Naive thymus-derived CD4-positive, alpha-beta T cell (primary cell): ENCODE measurements at regions of chr19 and their contacts with region 1.

Region 1: DNA sequence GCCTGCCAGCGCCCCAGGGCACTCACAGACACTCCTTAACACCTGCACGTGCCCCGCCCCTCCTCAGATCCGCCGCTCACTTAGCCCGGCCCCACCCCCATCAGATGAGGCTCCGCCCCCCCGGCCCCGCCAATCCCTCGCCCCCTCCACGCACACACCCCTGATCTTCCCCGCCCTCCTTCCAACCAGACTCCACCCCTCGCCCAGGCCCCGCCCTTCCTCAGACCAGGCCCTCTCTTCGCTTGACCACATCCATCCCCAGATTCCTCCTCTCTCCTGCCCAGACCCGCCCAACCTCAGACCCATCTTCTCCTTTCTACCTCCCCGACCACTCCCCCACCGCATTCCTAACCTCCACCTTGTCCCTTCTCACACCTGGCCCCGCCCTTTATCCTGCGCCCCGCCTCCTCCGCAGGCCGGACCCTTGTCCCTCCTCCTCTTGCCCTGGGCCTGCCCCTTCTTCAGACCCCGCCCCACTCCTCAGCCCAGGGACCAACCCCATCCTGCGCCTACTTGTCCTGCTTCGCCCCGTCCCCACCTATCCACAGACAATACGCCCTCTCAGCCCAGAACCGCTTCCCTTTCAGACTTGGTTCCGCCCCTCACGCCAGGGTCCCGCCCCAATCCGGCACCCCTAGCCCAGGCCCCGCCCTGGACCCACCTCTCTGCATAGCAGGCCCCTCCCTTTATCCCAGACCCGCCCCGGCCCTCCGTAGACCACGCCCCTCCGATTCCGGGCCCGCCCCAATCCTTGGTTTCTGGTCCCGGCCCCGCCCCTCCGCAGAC is 452 bp upstream of the KLHL26 start:
- DNase-seq: peak; percentile 97 to 100 (median 98)
- ATAC-seq: peak; percentile 95
- H3K4me3 ChIP-seq: peak overlapping the region; percentile 77
- H3K4me3 Mint-ChIP-seq: peak overlapping the region; percentile 71 to 100 (median 88)
- H3K27ac ChIP-seq: peak overlapping the region; percentile 88
- H3K27ac Mint-ChIP-seq: peak overlapping the region; percentile 70 to 96 (median 87)
- H3K4me1 ChIP-seq: peaks cover 6 to 19% of the 10 kb centered on the region in 2 donors
- H3K4me1 Mint-ChIP-seq: peaks cover 23 to 48% (median 36%) of the 10 kb centered on the region in 7 donors
- H3K27me3 ChIP-seq: no peaks in the 10 kb centered on the region
- H3K27me3 Mint-ChIP-seq: peaks cover 0 to 18% (median 3%) of the 10 kb centered on the region in 5 donors

Region 2: GRCh38 chr19:18023622-18024251 is 612.6 kb before region 1 on chr19:
- CTCF ChIA-PET with region 1: no interaction called
- POLR2A ChIA-PET with region 1: no interaction called
- intact Hi-C with region 1: no loop called
- DNase-seq: peak; percentile 55 to 95 (median 93)
- ATAC-seq: peak; percentile 88
- H3K4me3 ChIP-seq: peak overlapping the region; percentile 6
- H3K4me3 Mint-ChIP-seq: peak overlapping the region; percentile 76 to 87 (median 83)
- H3K27ac ChIP-seq: peak overlapping the region; percentile 95
- H3K27ac Mint-ChIP-seq: peak overlapping the region; percentile 91 to 100 (median 99)
- H3K4me1 ChIP-seq: peaks cover 22 to 41% of the 10 kb centered on the region in 2 donors
- H3K4me1 Mint-ChIP-seq: peaks cover 48 to 66% (median 64%) of the 10 kb centered on the region in 7 donors
- H3K27me3 ChIP-seq: no peaks in the 10 kb centered on the region
- H3K27me3 Mint-ChIP-seq: no peaks in the 10 kb centered on the region

Region 3: GRCh38 chr19:18542936-18543815 is 93.2 kb before region 1 on chr19 and contains the start of gene FKBP8:
- CTCF ChIA-PET with region 1: no interaction called
- POLR2A ChIA-PET with region 1: no interaction called
- intact Hi-C with region 1: loop called (anchors 1 to 5 kb)
- DNase-seq: peak; percentile 84 to 95 (median 91)
- ATAC-seq: peak; percentile 97
- H3K4me3 ChIP-seq: peak within 1 kb of the TSS; percentile 68
- H3K4me3 Mint-ChIP-seq: peak within 1 kb of the TSS; percentile 90 to 99 (median 94)
- H3K27ac ChIP-seq: peak within 1 kb of the TSS; percentile 87
- H3K27ac Mint-ChIP-seq: peak within 1 kb of the TSS; percentile 89 to 100 (median 97)
- H3K4me1 ChIP-seq: peaks cover 15 to 16% of the 10 kb centered on the region in 2 donors
- H3K4me1 Mint-ChIP-seq: peaks cover 14 to 31% (median 26%) of the 10 kb centered on the region in 7 donors
- H3K27me3 ChIP-seq: no peaks in the 10 kb centered on the region
- H3K27me3 Mint-ChIP-seq: no peaks in the 10 kb centered on the region
- total RNA-seq, gene FKBP8: 137 to 241 (median 221) TPM

Region 4: DNA sequence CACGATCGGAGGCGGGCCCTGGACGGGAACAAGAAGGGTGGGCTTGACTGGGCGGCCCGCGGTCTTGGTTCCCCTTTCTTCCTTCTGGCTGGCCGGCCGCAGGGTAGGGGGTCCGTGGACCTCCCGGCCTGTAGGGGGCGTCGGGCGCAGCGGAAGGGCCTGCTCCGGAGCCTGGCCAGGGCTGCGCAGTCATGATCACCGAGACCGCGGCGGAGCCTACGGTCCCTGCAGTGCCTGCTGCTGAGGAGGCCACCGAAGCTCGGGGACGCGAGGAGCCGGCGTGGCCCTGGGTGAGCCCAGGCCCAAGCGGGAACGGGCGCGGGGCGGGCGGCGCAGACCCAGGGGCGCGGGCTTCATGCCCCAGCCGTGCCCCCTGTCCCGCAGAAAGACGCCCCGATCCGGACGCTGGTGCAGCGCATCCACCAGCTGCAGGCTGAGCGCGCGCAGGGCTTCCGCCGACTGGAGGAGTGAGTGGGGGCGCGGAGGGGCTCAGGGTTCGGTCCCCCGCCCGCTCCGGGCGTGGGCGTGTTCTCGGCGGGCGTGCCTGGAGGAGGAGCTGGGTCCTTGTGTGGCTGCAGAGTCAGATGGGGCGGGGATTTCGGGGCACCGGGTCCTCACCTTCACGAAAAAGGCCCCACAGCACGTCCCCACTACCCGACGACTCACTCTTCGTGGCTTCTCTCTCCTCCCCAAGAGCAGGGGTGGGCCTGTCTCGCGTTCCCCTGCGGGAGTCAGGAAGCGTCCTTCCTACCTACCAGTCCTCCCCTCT is 47.6 kb before region 1 on chr19 and contains the start of gene REX1BD:
- CTCF ChIA-PET with region 1: no interaction called
- POLR2A ChIA-PET with region 1: interaction called, 3 read pairs
- intact Hi-C with region 1: loop called (anchors 1 to 2 kb)
- DNase-seq: peak; percentile 77 to 92 (median 89)
- ATAC-seq: peak; percentile 89
- H3K4me3 ChIP-seq: peak within 1 kb of the TSS; percentile 72
- H3K4me3 Mint-ChIP-seq: peak within 1 kb of the TSS; percentile 80 to 95 (median 92)
- H3K27ac ChIP-seq: peak within 1 kb of the TSS; percentile 88
- H3K27ac Mint-ChIP-seq: peak within 1 kb of the TSS; percentile 89 to 96 (median 93)
- H3K4me1 ChIP-seq: peaks cover 18 to 33% of the 10 kb centered on the region in 2 donors
- H3K4me1 Mint-ChIP-seq: peaks cover 20 to 56% (median 42%) of the 10 kb centered on the region in 7 donors
- H3K27me3 ChIP-seq: no peaks in the 10 kb centered on the region
- H3K27me3 Mint-ChIP-seq: peaks cover 0 to 3% (median 0%) of the 10 kb centered on the region in 5 donors
- total RNA-seq, gene REX1BD: 83.9 to 152 (median 116) TPM

Region 5: DNA sequence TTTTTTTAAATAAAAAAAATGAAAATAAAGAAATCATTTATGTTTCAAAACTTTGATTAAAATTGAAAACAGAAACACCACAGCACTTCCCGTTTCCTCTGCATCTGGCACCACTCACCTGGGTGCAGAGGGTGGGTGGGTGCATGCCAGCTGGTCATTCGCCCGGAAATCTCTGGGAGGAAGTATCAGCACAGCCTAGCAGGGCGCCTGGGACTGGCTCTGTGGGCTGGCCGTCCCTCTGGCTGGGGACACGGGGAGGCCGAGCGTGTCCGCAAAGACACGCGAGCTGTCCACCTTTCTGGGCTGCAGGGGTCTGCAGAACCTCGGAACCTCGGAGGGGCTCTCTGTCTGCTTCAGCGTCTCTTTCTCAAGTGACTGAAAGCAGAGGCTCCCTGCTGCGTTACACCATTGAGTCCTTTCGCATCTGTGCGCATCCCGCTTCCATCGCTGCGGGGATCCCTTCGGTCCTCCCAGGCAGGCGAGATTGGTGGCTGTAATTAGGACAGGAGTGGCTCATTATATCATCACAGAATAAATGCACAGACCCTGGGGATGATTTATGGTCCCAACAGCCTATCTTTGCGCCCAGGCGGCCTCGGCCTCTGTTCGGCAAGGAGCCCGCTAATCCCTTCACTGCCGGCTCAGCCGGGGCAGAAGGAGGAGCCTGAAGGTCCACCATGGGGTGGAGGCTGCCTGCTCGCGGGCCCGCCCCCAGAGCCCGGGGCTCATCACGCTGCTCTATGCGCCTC is 64.3 kb after region 1 on chr19:
- CTCF ChIA-PET with region 1: no interaction called
- POLR2A ChIA-PET with region 1: interaction called, 4 read pairs
- intact Hi-C with region 1: loop called in 1 of 2 experiments (anchors 1 kb)
- DNase-seq: peak; percentile 50 to 76 (median 68)
- ATAC-seq: peak; percentile 97
- H3K4me3 ChIP-seq: peak overlapping the region; percentile 71
- H3K4me3 Mint-ChIP-seq: peak overlapping the region; percentile 84 to 95 (median 91)
- H3K27ac ChIP-seq: peak overlapping the region; percentile 76
- H3K27ac Mint-ChIP-seq: peak overlapping the region; percentile 39 to 98 (median 94)
- H3K4me1 ChIP-seq: peaks cover 24 to 38% of the 10 kb centered on the region in 2 donors
- H3K4me1 Mint-ChIP-seq: peaks cover 15 to 52% (median 36%) of the 10 kb centered on the region in 7 donors
- H3K27me3 ChIP-seq: no peaks in the 10 kb centered on the region
- H3K27me3 Mint-ChIP-seq: peaks cover 0 to 4% (median 0%) of the 10 kb centered on the region in 5 donors

Region 6: DNA sequence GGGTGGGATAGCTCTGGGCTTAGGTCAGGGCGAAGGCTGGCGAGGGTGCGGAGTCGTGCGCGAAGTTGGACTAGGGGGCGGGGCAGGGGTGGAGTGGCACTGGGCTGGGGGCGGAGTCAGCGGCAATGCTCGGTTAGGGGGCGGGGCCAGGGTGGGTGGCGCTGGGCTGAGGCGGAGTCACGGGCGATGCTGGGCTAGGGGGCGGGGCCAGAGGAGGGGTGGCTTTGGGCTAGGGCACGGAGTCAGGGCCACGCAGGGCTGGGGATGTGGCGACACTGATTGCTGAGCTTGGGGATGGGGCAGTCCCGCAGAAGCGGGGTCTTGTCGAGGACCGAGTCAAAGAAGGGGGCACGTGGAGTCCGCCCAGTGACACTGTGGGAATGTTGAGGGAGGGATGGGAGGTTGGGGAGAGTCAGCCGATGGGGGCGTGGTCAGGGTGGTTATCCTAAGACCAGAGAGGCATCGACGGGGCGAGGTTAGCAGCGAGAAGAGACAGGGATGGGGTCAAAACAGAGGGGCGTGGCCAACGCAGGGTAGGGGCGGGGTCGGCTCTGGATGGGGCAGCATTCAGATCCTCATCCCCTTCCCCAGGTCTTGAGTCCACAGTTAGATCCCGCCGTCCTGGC is 296.0 kb after region 1 on chr19:
- CTCF ChIA-PET with region 1: no interaction called
- POLR2A ChIA-PET with region 1: no interaction called
- intact Hi-C with region 1: loop called in 1 of 2 experiments (anchors 5 kb)
- DNase-seq: peak; percentile 55 to 85 (median 72)
- ATAC-seq: peak; percentile 99
- H3K4me3 ChIP-seq: peak overlapping the region; percentile 55
- H3K4me3 Mint-ChIP-seq: peak overlapping the region; percentile 63 to 91 (median 80)
- H3K27ac ChIP-seq: peak overlapping the region; percentile 39
- H3K27ac Mint-ChIP-seq: peak overlapping the region in 4 of 9 donors; percentile 2 to 84 (median 16)
- H3K4me1 ChIP-seq: peaks cover 3 to 7% of the 10 kb centered on the region in 2 donors
- H3K4me1 Mint-ChIP-seq: peaks cover 0 to 15% (median 8%) of the 10 kb centered on the region in 7 donors
- H3K27me3 ChIP-seq: no peaks in the 10 kb centered on the region
- H3K27me3 Mint-ChIP-seq: peaks cover 0 to 15% (median 8%) of the 10 kb centered on the region in 5 donors